ENCODE measurements at regions of chr12 and their contacts with region 1.

Region 1: DNA sequence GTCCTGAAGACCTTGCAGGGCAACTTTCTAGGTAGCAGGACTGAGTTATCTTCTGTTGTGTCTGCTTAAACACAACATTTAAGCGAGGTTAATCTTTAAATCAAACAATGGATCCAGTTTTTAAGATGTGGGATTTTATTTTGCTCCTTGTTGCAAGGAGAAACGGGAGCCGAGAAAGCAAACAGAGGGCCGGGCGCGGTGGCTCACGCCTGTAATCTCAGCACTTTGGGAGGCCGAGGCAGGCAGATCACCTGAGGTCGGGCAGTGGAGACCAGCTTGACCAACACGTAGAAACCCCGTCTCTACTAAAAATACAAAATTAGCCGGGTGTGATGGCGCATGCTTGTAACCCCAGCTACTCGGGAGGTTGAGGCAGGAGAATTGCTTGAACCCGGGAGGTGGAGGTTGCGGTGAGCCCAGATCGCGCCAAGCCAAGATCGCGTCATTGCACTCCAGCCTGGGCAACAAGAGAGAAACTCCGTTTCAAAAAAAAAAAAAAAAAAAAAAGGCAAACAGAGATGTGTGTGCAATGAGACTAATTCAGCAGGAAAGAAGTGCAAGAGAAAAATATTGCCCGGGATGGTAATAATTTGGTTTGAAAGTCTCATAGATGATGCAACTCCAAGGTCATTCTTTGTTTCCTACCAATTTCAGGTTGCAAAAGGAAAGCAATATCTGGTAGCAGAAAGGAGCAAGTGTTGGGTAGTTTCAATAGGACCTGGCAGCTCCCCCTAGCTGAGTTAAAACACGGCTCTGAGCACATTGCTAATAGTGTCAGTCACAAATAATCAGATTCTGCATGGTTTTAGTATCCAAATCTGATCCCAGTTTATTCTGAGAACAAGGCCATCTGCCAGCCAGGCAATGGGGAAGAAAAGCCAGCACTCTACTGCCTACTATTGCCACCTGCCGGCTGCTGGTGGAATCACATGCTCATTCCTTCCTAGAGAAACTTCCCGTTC is 141.4 kb downstream of the PPM1H start:
- DNase-seq: peak; percentile 70
- H3K27ac ChIP-seq: no peak overlapping the region
- CTCF ChIP-seq: peak; percentile 89

Region 2: GRCh38 chr12:62581288-62582064 is 212.1 kb before region 1 on chr12:
- CTCF ChIA-PET with region 1: interaction called, 20 read pairs
- POLR2A ChIA-PET with region 1: no interaction called
- DNase-seq: peak; percentile 40
- H3K27ac ChIP-seq: no peak overlapping the region
- CTCF ChIP-seq: peak; percentile 69

Region 3: DNA sequence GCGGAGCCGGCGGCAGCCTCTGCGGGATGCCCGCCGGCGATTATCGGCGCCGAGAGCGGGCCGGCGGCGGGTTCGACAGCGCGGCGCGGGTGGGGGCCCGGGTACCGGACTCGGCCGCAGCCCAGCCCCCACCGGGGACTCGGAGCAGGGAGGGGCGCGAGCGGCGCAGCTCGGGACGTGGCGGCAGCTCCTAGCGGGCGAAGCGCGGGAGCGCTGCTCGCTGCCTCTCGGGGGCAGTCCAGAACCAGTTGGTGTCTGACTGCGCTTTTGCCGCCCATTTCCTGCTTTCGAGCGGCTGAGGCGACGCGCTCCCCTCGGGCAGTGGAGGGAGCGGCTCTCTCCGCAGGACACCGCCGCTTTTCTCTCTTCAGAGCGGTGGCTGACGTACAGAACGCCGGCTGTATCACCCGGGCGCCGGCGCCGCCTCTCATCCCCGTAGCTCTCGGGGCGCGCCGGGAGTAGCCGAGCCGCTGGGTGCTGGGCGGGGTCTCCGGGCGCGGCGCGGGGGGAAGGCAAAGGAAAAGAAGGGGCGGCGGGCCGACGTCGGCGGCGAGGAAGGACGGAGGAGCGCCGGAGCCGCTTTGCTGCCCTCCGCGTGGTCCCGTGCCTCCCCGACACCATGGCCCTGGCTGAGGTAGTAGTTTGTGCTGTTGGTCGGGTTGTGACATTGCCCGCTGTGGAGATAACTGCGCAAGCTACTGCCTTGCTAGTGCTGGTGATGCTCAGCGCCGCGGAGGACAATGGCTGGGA is 190.3 kb before region 1 on chr12:
- CTCF ChIA-PET with region 1: interaction called, 13 read pairs
- POLR2A ChIA-PET with region 1: no interaction called
- DNase-seq: peak; percentile 73
- H3K27ac ChIP-seq: peak overlapping the region; percentile 100
- CTCF ChIP-seq: peak; percentile 52

Measured in RWPE1 (cell line).